ENCODE measurements at regions of chr11 and their contacts with region 1.

Region 1: DNA sequence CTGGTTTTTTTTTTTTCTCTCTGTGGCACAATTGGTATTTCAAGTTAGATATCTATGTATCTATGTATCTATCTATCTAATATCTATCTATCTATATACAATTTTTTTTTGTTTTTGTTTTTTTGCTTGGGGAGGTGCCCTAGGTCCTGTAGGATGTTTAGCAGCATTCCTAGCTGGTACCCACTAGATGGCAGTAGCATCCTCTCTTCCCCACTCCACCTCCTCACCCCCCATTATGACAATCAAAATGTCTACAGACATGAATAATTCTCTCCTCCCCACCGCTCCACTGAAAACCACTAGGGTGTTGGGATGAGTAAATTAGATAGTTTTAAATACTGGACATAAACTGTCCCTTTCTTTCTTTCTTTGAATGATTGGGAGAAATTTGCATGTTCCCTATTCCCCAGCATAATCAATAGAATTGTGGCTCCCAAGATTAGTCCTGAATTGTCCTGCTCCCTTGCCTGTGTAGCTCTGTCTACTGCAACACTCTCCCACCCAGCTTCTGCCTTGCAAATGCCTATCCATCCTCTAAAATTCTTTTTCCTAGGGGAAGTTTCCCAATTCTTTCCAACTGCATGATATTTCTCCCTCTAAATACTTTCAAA is 1152.4 kb downstream of the LRRC4C start:
- DNase-seq: no peak
- H3K4me3 ChIP-seq: no peak overlapping the region
- H3K27ac ChIP-seq: no peak overlapping the region
- H3K27me3 ChIP-seq: no peaks in the 10 kb centered on the region
- CTCF ChIP-seq: peak; percentile 92

Region 2: GRCh38 chr11:40241524-40242051 is 65.5 kb before region 1 on chr11:
- CTCF ChIA-PET with region 1: no interaction called
- POLR2A ChIA-PET with region 1: no interaction called
- DNase-seq: no peak
- H3K4me3 ChIP-seq: no peak overlapping the region
- H3K27ac ChIP-seq: no peak overlapping the region
- H3K27me3 ChIP-seq: no peaks in the 10 kb centered on the region
- CTCF ChIP-seq: no peak

Region 3: GRCh38 chr11:40323241-40323640 is 16.2 kb after region 1 on chr11:
- CTCF ChIA-PET with region 1: interaction called, 10 read pairs
- POLR2A ChIA-PET with region 1: no interaction called
- DNase-seq: no peak
- H3K4me3 ChIP-seq: no peak overlapping the region
- H3K27ac ChIP-seq: no peak overlapping the region
- H3K27me3 ChIP-seq: no peaks in the 10 kb centered on the region
- CTCF ChIP-seq: no peak

Region 4: DNA sequence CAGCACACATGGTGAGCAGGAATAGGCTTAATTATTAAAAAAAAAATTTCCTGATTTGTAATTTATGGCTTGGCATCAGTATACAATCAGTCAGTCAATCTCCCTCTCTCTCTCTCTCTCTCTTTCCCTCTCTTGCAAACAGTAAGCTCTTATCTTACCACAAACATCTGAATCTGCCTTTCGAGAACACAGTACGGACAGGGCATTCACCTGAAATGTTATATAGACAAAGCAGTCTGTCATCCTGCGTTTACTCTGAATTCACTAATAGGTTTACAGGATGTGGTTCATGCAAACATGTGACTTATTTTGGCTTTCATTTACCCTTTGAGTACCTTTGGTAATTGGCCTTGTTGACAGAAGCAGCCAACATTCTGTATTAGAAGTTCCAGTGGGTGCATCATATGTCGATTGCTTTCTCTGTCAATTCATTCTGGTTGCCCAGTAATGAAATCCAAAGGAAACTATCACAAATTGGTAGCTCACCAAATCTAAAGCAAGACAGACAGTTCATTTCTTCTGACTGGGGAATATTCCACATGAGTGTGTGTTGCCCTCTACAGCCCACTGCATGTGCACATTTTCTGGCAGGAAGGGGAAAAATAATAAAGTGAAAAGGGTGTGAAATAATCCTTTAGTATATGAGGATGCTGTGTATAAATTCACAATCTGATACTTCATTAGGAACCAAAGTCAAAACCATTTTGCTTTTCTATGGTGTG is 94.2 kb after region 1 on chr11:
- CTCF ChIA-PET with region 1: no interaction called
- POLR2A ChIA-PET with region 1: no interaction called
- DNase-seq: no peak
- H3K4me3 ChIP-seq: no peak overlapping the region
- H3K27ac ChIP-seq: no peak overlapping the region
- H3K27me3 ChIP-seq: no peaks in the 10 kb centered on the region
- CTCF ChIP-seq: no peak

Region 5: GRCh38 chr11:40569947-40570531 is 263.0 kb after region 1 on chr11:
- CTCF ChIA-PET with region 1: no interaction called
- POLR2A ChIA-PET with region 1: no interaction called
- DNase-seq: no peak
- H3K4me3 ChIP-seq: no peak overlapping the region
- H3K27ac ChIP-seq: no peak overlapping the region
- H3K27me3 ChIP-seq: no peaks in the 10 kb centered on the region
- CTCF ChIP-seq: no peak